ENCODE measurements at regions of chr12 and their contacts with region 1.

Region 1: GRCh38 chr12:98618952-98619351 is 25.5 kb downstream of the SLC25A3 start:
- DNase-seq: no peak
- H3K4me3 Mint-ChIP-seq: no peak overlapping the region
- H3K27ac Mint-ChIP-seq: no peak overlapping the region
- H3K4me1 Mint-ChIP-seq: no peaks in the 10 kb centered on the region
- H3K27me3 Mint-ChIP-seq: no peaks in the 10 kb centered on the region
- CTCF ChIP-seq: no peak

Region 2: GRCh38 chr12:98397316-98398105 is 221.4 kb before region 1 on chr12:
- CTCF ChIA-PET with region 1: no interaction called
- intact Hi-C with region 1: no loop called
- DNase-seq: peak; percentile 88
- H3K4me3 Mint-ChIP-seq: peak overlapping the region; percentile 80
- H3K27ac Mint-ChIP-seq: peak overlapping the region; percentile 67
- H3K4me1 Mint-ChIP-seq: peaks cover 41% of the 10 kb centered on the region
- H3K27me3 Mint-ChIP-seq: peaks cover 7% of the 10 kb centered on the region
- CTCF ChIP-seq: peak; percentile 86

Region 3: GRCh38 chr12:98578821-98579220 is 40.1 kb before region 1 on chr12:
- CTCF ChIA-PET with region 1: no interaction called
- intact Hi-C with region 1: no loop called
- DNase-seq: peak; percentile 25
- H3K4me3 Mint-ChIP-seq: no peak overlapping the region
- H3K27ac Mint-ChIP-seq: no peak overlapping the region
- H3K4me1 Mint-ChIP-seq: no peaks in the 10 kb centered on the region
- H3K27me3 Mint-ChIP-seq: no peaks in the 10 kb centered on the region
- CTCF ChIP-seq: no peak

Region 4: GRCh38 chr12:98679611-98680005 is 60.7 kb after region 1 on chr12:
- CTCF ChIA-PET with region 1: no interaction called
- intact Hi-C with region 1: loop called (anchors 10 kb)
- DNase-seq: no peak
- H3K4me3 Mint-ChIP-seq: no peak overlapping the region
- H3K27ac Mint-ChIP-seq: no peak overlapping the region
- H3K4me1 Mint-ChIP-seq: no peaks in the 10 kb centered on the region
- H3K27me3 Mint-ChIP-seq: no peaks in the 10 kb centered on the region
- CTCF ChIP-seq: no peak

Measured in Calu3 (cell line).